H1 (cell line): ENCODE measurements at regions of chr1 and their contacts with region 1.

Region 1: DNA sequence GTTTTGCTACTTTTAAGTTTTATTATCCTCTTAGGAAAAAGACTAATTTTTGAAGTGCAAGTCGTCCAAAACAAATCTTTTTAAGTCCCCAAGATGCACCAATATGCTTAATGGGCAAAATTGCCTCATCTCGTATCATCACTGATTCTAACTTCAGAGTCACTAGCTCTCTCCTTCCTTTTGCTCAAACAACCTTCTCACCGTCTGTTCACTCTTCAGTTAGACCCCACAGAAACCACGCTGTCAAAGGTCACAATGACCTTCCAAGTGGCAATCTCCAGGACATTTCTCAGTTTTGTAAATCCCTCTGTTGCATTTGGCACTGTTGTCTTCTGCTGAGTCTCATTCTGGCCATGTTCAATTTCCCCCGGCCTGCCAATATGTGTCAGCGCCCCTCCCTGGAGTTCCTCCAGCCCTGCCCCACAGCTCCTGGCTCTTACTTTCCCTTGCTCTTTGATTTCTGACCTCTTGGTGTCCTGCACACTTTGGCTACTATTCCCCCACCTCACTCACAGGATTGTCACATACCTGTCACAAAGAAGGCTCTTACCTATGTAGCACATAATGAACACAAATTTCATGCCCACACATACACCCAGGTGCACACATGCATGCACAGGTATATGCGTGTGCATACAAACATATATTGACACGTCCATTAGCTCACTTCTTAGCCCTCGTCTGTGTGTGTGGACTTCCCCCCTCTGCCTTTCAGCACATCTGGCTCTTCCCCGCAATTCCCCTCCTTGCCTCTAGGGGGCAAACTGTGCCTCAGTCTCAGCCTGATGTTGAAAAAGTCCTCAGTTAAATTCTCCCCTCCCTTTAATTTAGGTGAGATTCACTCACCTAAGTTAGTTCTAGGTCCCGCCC is 354.0 kb upstream of the DUSP10 start:
- DNase-seq: peak; percentile 33 to 81
- H3K4me3 ChIP-seq: no peak overlapping the region
- H3K27ac ChIP-seq: no peak overlapping the region
- H3K4me1 ChIP-seq: peaks cover 0 to 6% (median 5%) of the 10 kb centered on the region in 4 experiments; a peak in 2 of 7 replicates
- H3K27me3 ChIP-seq: no peaks in the 10 kb centered on the region
- CTCF ChIP-seq: peak; percentile 63 to 97 (median 83)
- EP300 ChIP-seq: no peak
- POLR2A ChIP-seq: no peak
- RAD21 ChIP-seq: peak; percentile 74 to 77

Region 2: GRCh38 chr1:222004032-222004431 is 91.8 kb before region 1 on chr1:
- CTCF ChIA-PET with region 1: no interaction called
- POLR2A ChIA-PET with region 1: no interaction called
- DNase-seq: no peak
- H3K4me3 ChIP-seq: no peak overlapping the region
- H3K27ac ChIP-seq: no peak overlapping the region
- H3K4me1 ChIP-seq: no peaks in the 10 kb centered on the region
- H3K27me3 ChIP-seq: no peaks in the 10 kb centered on the region
- CTCF ChIP-seq: no peak
- EP300 ChIP-seq: no peak
- POLR2A ChIP-seq: no peak
- RAD21 ChIP-seq: no peak

Region 3: DNA sequence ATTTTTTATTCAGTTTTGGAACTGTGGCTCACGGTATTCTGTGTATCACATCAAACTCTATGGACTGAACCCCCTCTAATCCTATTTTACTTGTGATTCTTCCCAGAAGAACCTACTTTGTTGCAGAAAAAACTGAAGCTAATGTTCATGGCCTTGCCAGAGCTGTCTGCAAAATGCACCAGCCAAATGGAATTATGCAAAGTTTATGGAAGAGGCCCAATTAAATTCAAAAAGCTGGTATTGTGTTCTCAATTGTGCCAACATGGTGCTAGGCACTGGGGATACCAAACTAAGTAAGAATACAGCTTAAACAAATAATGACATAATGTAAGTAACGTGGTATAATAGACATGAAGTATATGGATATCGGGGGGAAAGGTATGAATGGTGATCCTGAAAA is 80.2 kb before region 1 on chr1:
- CTCF ChIA-PET with region 1: no interaction called
- POLR2A ChIA-PET with region 1: no interaction called
- DNase-seq: no peak
- H3K4me3 ChIP-seq: no peak overlapping the region
- H3K27ac ChIP-seq: no peak overlapping the region
- H3K4me1 ChIP-seq: no peaks in the 10 kb centered on the region
- H3K27me3 ChIP-seq: no peaks in the 10 kb centered on the region
- CTCF ChIP-seq: no peak
- EP300 ChIP-seq: no peak
- POLR2A ChIP-seq: no peak
- RAD21 ChIP-seq: no peak

Region 4: GRCh38 chr1:222060210-222060916 is 35.5 kb before region 1 on chr1:
- CTCF ChIA-PET with region 1: no interaction called
- POLR2A ChIA-PET with region 1: no interaction called
- DNase-seq: no peak
- H3K4me3 ChIP-seq: no peak overlapping the region
- H3K27ac ChIP-seq: no peak overlapping the region
- H3K4me1 ChIP-seq: no peaks in the 10 kb centered on the region
- H3K27me3 ChIP-seq: no peaks in the 10 kb centered on the region
- CTCF ChIP-seq: no peak
- EP300 ChIP-seq: no peak
- POLR2A ChIP-seq: no peak
- RAD21 ChIP-seq: no peak

Region 5: DNA sequence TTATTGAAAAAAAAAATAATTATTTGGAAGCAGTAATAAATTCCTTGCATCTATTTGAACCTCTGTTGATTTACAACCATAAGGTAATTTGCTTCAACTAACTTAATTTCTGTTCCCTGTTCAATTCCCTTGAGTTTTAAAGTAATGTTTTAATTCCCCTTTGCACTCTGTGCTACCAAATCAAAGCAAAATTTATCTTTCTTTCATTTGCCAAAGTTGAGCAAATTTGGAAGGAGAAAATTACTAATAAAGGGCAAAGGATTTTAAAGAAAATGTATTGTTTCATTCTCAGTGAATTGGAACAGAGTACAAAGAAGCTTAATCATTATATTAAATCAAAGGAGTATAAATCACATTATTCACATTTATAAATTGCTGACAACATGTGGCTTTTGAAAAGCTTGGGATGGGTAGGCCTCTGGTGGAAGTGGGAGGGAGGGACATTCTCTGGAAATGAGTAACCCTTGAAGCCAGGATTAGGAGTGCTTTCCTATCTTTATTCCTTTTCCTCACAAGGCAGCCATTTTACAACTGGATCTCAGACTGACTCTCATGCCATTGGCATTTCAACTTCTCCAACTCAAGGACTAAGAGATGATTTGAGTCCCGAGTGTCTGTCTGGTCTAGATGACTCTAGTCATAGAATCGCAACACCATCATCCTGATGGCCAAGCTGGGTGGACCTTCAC is 22.4 kb before region 1 on chr1:
- CTCF ChIA-PET with region 1: interaction called, 10 read pairs
- POLR2A ChIA-PET with region 1: no interaction called
- DNase-seq: no peak
- H3K4me3 ChIP-seq: no peak overlapping the region
- H3K27ac ChIP-seq: no peak overlapping the region
- H3K4me1 ChIP-seq: peaks cover 3 to 8% (median 4%) of the 10 kb centered on the region in 4 experiments; a peak in 6 of 7 replicates
- H3K27me3 ChIP-seq: no peaks in the 10 kb centered on the region
- CTCF ChIP-seq: no peak
- EP300 ChIP-seq: no peak
- POLR2A ChIP-seq: no peak
- RAD21 ChIP-seq: no peak

Region 6: GRCh38 chr1:222114536-222115156 is 18.8 kb after region 1 on chr1:
- CTCF ChIA-PET with region 1: interaction called, 19 read pairs
- POLR2A ChIA-PET with region 1: no interaction called
- DNase-seq: no peak
- H3K4me3 ChIP-seq: no peak overlapping the region
- H3K27ac ChIP-seq: no peak overlapping the region
- H3K4me1 ChIP-seq: no peaks in the 10 kb centered on the region
- H3K27me3 ChIP-seq: no peaks in the 10 kb centered on the region; a peak in 2 of 7 replicates
- CTCF ChIP-seq: no peak
- EP300 ChIP-seq: no peak
- POLR2A ChIP-seq: no peak
- RAD21 ChIP-seq: no peak

Region 7: DNA sequence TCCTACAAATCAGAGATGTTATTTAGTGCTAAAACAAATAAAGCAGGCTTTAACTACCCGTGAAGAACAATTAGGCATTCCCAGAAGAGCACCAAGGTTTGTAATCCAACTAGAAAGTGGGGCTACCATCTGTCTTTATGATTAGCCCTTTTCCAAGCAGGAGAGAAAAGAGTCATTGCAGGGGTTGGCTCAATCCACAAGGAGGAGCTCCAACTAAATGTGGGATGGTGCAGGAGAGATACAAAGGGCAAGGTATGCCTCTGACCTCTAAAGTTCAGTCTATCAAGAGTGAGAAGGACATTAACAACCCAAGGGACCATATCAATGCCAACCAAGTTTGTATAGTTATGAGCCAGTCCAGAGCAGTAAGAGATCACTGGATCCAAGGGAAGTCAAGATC is 28.8 kb after region 1 on chr1:
- CTCF ChIA-PET with region 1: interaction called, 18 read pairs
- POLR2A ChIA-PET with region 1: no interaction called
- DNase-seq: no peak
- H3K4me3 ChIP-seq: no peak overlapping the region
- H3K27ac ChIP-seq: no peak overlapping the region
- H3K4me1 ChIP-seq: no peaks in the 10 kb centered on the region
- H3K27me3 ChIP-seq: no peaks in the 10 kb centered on the region
- CTCF ChIP-seq: peak in 2 of 3 experiments; percentile 59 to 78; a peak in 3 of 4 replicates
- EP300 ChIP-seq: no peak
- POLR2A ChIP-seq: no peak
- RAD21 ChIP-seq: peak; percentile 74

Region 8: GRCh38 chr1:222165629-222166028 is 69.8 kb after region 1 on chr1:
- CTCF ChIA-PET with region 1: interaction called, 12 read pairs
- POLR2A ChIA-PET with region 1: no interaction called
- DNase-seq: no peak
- H3K4me3 ChIP-seq: no peak overlapping the region
- H3K27ac ChIP-seq: no peak overlapping the region
- H3K4me1 ChIP-seq: no peaks in the 10 kb centered on the region
- H3K27me3 ChIP-seq: no peaks in the 10 kb centered on the region
- CTCF ChIP-seq: no peak
- EP300 ChIP-seq: no peak
- POLR2A ChIP-seq: no peak
- RAD21 ChIP-seq: no peak

Region 9: GRCh38 chr1:222441066-222441465 is 345.2 kb after region 1 on chr1:
- CTCF ChIA-PET with region 1: interaction called, 13 read pairs
- POLR2A ChIA-PET with region 1: no interaction called
- DNase-seq: no peak
- H3K4me3 ChIP-seq: no peak overlapping the region
- H3K27ac ChIP-seq: no peak overlapping the region
- H3K4me1 ChIP-seq: peaks cover 0 to 3% (median under 1%) of the 10 kb centered on the region in 4 experiments; a peak in 2 of 7 replicates
- H3K27me3 ChIP-seq: no peaks in the 10 kb centered on the region
- CTCF ChIP-seq: no peak
- EP300 ChIP-seq: no peak
- POLR2A ChIP-seq: no peak
- RAD21 ChIP-seq: no peak

Region 10: GRCh38 chr1:222455188-222455879 is 359.5 kb after region 1 on chr1:
- CTCF ChIA-PET with region 1: interaction called, 20 read pairs
- POLR2A ChIA-PET with region 1: no interaction called
- DNase-seq: peak; percentile 50 to 90
- H3K4me3 ChIP-seq: no peak overlapping the region
- H3K27ac ChIP-seq: no peak overlapping the region
- H3K4me1 ChIP-seq: no peaks in the 10 kb centered on the region; a peak in 2 of 7 replicates
- H3K27me3 ChIP-seq: no peaks in the 10 kb centered on the region
- CTCF ChIP-seq: peak; percentile 89 to 99 (median 94)
- EP300 ChIP-seq: no peak
- POLR2A ChIP-seq: no peak
- RAD21 ChIP-seq: peak; percentile 95 to 96